ENCODE measurements at regions of chr6 and their contacts with region 1.

Region 1: DNA sequence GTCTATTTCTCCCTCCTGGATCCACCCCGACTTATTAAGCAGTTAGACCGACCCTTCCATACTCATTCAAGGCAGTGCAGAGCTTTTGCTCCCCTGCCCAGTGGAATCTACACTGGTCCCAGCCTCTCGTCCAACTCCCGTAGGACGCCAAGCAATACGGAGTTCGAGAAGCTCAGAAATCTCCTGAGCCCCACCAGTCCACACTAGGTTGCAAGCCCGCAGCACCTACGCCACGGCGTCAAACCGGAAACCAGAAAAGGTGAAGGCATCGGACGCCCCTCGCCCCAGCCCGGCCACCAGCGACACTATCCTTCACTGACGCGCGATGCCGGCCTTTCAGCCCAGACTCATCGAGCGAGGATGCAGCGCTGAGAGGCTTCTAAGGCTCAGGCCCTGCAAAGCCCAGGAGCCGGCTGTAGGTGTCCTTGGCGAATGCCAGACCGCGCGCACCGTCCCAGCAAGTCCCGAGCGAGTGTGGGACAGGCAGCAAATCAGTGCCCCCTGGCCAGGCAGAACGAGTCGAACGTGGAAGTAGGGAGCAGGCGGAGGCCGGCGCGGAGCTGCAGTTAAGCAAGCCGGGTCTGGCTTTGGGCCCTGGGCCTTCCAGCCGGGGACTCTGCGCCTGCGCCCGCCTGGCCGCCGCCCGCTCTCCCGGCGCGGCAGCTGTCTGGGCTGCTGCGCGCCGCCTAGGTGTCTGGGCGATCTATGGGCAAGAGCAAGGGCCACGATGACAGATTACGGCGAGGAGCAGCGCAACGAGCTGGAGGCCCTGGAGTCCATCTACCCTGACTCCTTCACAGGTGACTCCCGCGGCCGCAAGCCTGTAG is at the start of gene RWDD1:
- DNase-seq: peak; percentile 99
- ATAC-seq: peak; percentile 89
- H3K4me3 Mint-ChIP-seq: peak within 1 kb of the TSS; percentile 94
- H3K27ac Mint-ChIP-seq: peak within 1 kb of the TSS; percentile 98
- H3K4me1 Mint-ChIP-seq: peaks cover 39% of the 10 kb centered on the region
- H3K27me3 Mint-ChIP-seq: no peaks in the 10 kb centered on the region
- total RNA-seq, gene RWDD1: 40.0 to 65.4 TPM

Region 2: DNA sequence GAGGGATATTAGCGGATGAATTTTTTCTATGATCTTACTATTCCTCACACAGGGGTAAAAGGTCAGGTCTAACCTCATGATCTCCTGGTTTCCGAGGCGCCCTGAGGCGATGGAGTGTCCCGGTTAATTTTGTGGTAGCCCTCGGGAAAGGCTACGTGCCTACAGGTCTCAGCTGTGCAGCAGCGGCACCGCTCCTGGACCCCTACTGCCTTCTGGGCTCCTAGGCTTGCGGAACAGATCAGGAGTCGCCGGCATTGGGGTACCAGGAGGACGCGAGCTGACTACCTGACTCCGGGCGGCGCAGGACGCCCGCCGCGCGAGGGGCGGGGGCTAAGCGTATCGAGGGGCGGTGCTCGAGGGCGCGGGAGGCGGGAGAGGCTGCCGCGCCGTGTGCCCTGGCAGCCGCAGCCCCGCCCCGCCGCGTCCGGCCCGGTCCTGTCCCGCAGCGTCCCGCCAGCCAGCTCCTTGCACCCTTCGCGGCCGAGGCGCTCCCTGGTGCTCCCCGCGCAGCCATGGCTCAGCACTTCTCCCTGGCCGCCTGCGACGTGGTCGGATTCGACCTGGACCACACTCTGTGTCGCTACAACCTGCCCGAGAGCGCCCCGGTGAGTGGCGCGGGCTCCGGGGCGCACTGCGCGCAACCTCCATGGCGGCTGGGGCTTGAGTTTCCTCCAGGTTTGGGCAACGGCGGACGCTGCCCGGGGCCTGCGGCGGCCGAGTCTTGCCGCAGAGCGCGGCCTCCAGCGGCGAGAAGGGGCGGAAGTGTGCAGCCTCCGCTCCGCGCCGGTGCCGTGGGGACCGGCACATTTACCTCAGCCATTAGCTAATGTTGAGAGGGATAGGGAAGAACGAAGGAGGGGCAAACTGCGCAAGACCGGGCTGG is 470.4 kb before region 1 on chr6 and contains the start of gene NT5DC1:
- CTCF ChIA-PET with region 1: no interaction called
- POLR2A ChIA-PET with region 1: no interaction called
- intact Hi-C with region 1: loop called (anchors 1 to 2 kb)
- DNase-seq: peak; percentile 92
- ATAC-seq: peak; percentile 93
- H3K4me3 Mint-ChIP-seq: peak within 1 kb of the TSS; percentile 86
- H3K27ac Mint-ChIP-seq: peak within 1 kb of the TSS; percentile 88
- H3K4me1 Mint-ChIP-seq: peaks cover 50% of the 10 kb centered on the region
- H3K27me3 Mint-ChIP-seq: no peaks in the 10 kb centered on the region
- total RNA-seq, gene NT5DC1: 39.4 to 42.4 TPM

Region 3: GRCh38 chr6:116263353-116263752 is 307.7 kb before region 1 on chr6:
- CTCF ChIA-PET with region 1: no interaction called
- POLR2A ChIA-PET with region 1: no interaction called
- intact Hi-C with region 1: no loop called
- DNase-seq: no peak
- ATAC-seq: no peak
- H3K4me3 Mint-ChIP-seq: no peak overlapping the region
- H3K27ac Mint-ChIP-seq: no peak overlapping the region
- H3K4me1 Mint-ChIP-seq: peaks cover 30% of the 10 kb centered on the region
- H3K27me3 Mint-ChIP-seq: no peaks in the 10 kb centered on the region

Region 4: GRCh38 chr6:116279260-116280063 is 291.6 kb before region 1 on chr6 and contains the start of gene TSPYL1:
- CTCF ChIA-PET with region 1: no interaction called
- POLR2A ChIA-PET with region 1: interaction called, 6 read pairs
- intact Hi-C with region 1: loop called (anchors 1 to 2 kb)
- DNase-seq: peak; percentile 97
- ATAC-seq: peak; percentile 94
- H3K4me3 Mint-ChIP-seq: peak within 1 kb of the TSS; percentile 93
- H3K27ac Mint-ChIP-seq: peak within 1 kb of the TSS; percentile 98
- H3K4me1 Mint-ChIP-seq: peaks cover 32% of the 10 kb centered on the region
- H3K27me3 Mint-ChIP-seq: no peaks in the 10 kb centered on the region
- total RNA-seq, gene TSPYL1: 37.5 to 38.2 TPM

Region 5: DNA sequence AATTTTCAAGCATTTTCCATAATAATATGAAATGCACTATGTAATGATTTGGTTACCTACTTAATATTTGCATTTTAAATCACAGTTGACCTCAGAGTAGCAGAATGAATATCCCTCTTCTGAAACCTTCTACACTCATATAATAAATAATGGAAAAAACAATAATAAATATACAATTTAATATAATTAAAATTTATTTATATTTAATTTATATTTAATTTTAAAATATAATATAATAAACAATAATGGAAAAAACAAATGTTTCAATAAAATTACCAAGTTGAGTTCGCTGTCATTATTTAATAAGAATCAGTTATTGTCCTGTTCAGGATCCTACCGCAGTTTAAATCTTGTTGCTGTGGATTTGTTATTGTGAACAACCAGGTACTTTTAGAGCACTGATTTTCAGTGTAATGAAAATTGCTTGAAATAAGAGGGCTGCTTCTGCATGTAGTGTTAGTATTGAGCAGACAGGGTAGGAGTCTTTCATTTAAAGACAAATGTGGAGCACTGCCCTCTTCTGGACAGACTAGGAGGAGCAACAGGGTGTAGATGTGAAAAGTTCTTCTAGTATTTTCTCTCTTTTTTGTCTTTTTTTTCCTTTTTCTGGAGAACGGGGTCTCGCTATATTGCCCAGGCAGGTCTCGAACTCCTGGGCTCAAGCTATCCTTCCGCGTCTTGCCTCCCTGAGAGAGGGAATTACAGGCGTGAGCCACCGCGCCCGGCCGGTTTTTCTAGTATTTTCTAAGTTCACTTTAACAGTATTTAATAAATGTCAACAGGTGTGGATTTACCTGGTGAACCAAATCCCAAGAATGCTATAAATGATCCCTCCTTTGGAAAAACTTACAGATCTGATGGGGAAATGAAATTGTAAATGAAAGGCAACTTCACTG is 39.1 kb before region 1 on chr6:
- CTCF ChIA-PET with region 1: interaction called, 38 read pairs
- POLR2A ChIA-PET with region 1: no interaction called
- intact Hi-C with region 1: no loop called
- DNase-seq: peak; percentile 77
- ATAC-seq: peak; percentile 91
- H3K4me3 Mint-ChIP-seq: no peak overlapping the region
- H3K27ac Mint-ChIP-seq: no peak overlapping the region
- H3K4me1 Mint-ChIP-seq: no peaks in the 10 kb centered on the region
- H3K27me3 Mint-ChIP-seq: peaks cover 10% of the 10 kb centered on the region

Region 6: GRCh38 chr6:116648156-116648555 is 77.1 kb after region 1 on chr6:
- CTCF ChIA-PET with region 1: interaction called, 3 read pairs
- POLR2A ChIA-PET with region 1: no interaction called
- intact Hi-C with region 1: loop called in 1 of 2 experiments (anchors 2 kb)
- DNase-seq: no peak
- ATAC-seq: no peak
- H3K4me3 Mint-ChIP-seq: no peak overlapping the region
- H3K27ac Mint-ChIP-seq: no peak overlapping the region
- H3K4me1 Mint-ChIP-seq: peaks cover 6% of the 10 kb centered on the region
- H3K27me3 Mint-ChIP-seq: no peaks in the 10 kb centered on the region

Region 7: GRCh38 chr6:116680975-116681808 is 110.1 kb after region 1 on chr6 and contains the start of gene KPNA5:
- CTCF ChIA-PET with region 1: no interaction called
- POLR2A ChIA-PET with region 1: interaction called, 5 read pairs
- intact Hi-C with region 1: loop called (anchors 1 kb)
- DNase-seq: peak; percentile 96
- ATAC-seq: peak; percentile 96
- H3K4me3 Mint-ChIP-seq: peak within 1 kb of the TSS; percentile 98
- H3K27ac Mint-ChIP-seq: peak within 1 kb of the TSS; percentile 99
- H3K4me1 Mint-ChIP-seq: peaks cover 31% of the 10 kb centered on the region
- H3K27me3 Mint-ChIP-seq: no peaks in the 10 kb centered on the region
- total RNA-seq, gene KPNA5: 10.4 to 13.6 TPM

Region 8: DNA sequence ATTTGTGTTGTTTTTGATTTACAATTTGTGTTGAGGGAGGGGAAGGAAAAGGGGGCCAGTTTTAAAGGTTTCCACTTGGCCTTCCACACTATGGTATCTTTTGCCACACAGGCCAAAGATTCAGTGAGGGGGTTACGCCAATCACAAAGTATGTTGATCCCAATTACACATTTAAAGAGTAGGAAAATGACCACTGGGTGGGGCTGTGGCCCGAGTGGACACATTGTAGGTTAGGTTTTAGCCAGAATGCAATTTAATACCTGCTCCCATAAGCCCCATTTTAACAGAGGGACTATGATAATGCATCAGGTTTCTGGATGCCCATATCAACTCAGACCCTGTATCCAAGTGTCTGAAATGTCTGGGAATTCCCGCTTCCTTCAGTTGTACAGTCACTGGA is 709.9 kb after region 1 on chr6:
- CTCF ChIA-PET with region 1: no interaction called
- POLR2A ChIA-PET with region 1: no interaction called
- intact Hi-C with region 1: no loop called
- DNase-seq: no peak
- ATAC-seq: no peak
- H3K4me3 Mint-ChIP-seq: no peak overlapping the region
- H3K27ac Mint-ChIP-seq: no peak overlapping the region
- H3K4me1 Mint-ChIP-seq: no peaks in the 10 kb centered on the region
- H3K27me3 Mint-ChIP-seq: peaks cover 15% of the 10 kb centered on the region

Measured in activated CD4-positive, alpha-beta T cell treated with anti-CD3 and anti-CD28 coated beads for 36 hours (primary cell).